AG04450 (cell line): ENCODE measurements at regions of chr11 and their contacts with region 1.

Region 1: DNA sequence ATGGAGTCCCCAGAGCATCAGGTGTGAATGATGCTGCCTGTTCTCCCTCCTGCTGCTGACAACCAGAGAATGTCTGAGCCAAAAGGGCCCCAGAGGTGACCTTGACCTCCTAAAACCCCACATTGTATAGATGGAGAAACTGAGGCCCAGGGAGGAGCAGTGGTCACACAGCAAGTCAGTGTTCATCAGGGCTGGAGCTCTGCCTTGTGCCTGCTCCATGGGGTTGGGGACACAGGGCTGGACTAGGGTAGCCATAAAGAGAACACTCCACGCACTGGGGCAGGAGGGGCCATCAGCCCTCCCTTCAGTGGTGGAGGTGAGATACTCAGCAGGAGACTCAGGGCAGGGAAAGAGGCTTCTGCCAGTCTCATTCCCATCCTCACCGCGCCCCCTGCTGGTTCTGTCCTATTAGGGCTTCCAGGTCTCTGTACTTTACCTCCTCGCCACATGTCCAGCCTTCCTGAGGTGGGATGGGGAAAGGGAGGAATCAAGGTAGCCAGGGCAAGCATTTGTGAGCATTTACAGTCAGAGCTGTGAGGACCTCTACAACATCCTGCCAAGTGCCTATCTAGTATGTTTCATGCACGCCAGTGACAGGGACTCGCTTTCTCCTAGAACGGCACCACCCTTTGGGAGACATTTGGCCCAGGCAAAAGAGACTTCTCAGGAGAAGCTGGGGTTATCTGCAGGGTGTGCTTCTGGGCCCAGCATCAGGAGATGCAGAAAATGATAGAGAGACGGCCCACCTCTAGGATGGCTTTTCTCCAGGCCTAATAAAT is 43.2 kb downstream of the NEU3 start:
- DNase-seq: peak; percentile 49
- H3K4me3 ChIP-seq: no peak overlapping the region
- H3K27ac ChIP-seq: peak overlapping the region; percentile 82
- H3K27me3 ChIP-seq: no peaks in the 10 kb centered on the region
- CTCF ChIP-seq: peak; percentile 88

Region 2: GRCh38 chr11:74988541-74989260 is 43.3 kb before region 1 on chr11 and contains the start of gene NEU3:
- CTCF ChIA-PET with region 1: interaction called, 10 read pairs
- POLR2A ChIA-PET with region 1: no interaction called
- DNase-seq: peak; percentile 29
- H3K4me3 ChIP-seq: peak within 1 kb of the TSS; percentile 79
- H3K27ac ChIP-seq: peak within 1 kb of the TSS; percentile 66
- H3K27me3 ChIP-seq: no peaks in the 10 kb centered on the region
- CTCF ChIP-seq: no peak
- polyA plus RNA-seq, gene NEU3: 5.6 and 5.7 TPM in 2 replicates

Region 3: GRCh38 chr11:75014129-75014528 is 17.8 kb before region 1 on chr11:
- CTCF ChIA-PET with region 1: interaction called, 11 read pairs
- POLR2A ChIA-PET with region 1: no interaction called
- DNase-seq: peak; percentile 77
- H3K4me3 ChIP-seq: no peak overlapping the region
- H3K27ac ChIP-seq: peak overlapping the region; percentile 72
- H3K27me3 ChIP-seq: no peaks in the 10 kb centered on the region
- CTCF ChIP-seq: peak; percentile 43

Region 4: DNA sequence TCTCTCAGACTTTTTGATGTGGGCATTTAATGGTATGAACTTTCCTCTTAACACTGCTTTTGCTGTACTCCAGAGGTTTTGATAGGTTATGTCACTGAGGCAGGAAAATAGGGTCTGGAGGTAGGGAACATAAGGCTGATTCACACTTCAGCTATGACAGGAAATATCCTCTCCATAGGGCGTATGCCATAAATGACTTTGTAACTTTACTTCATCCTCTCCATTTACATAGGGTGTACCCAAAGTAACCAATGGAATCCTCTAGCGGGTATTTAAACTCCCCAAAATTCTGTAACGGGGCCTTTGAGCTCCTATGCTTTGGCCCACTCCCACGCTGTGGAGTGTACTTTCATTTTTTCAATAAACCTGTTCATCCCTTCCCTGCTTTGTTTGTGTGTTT is 15.2 kb after region 1 on chr11:
- CTCF ChIA-PET with region 1: interaction called, 11 read pairs
- POLR2A ChIA-PET with region 1: no interaction called
- DNase-seq: no peak
- H3K4me3 ChIP-seq: no peak overlapping the region
- H3K27ac ChIP-seq: no peak overlapping the region
- H3K27me3 ChIP-seq: peaks cover 9% of the 10 kb centered on the region
- CTCF ChIP-seq: no peak

Region 5: GRCh38 chr11:75204685-75205563 is 173.0 kb after region 1 on chr11:
- CTCF ChIA-PET with region 1: interaction called, 132 read pairs
- POLR2A ChIA-PET with region 1: no interaction called
- DNase-seq: peak; percentile 53
- H3K4me3 ChIP-seq: no peak overlapping the region
- H3K27ac ChIP-seq: no peak overlapping the region
- H3K27me3 ChIP-seq: peaks cover 41% of the 10 kb centered on the region
- CTCF ChIP-seq: peak; percentile 95